ENCODE measurements at regions of chr2 and their contacts with region 1.

Region 1: DNA sequence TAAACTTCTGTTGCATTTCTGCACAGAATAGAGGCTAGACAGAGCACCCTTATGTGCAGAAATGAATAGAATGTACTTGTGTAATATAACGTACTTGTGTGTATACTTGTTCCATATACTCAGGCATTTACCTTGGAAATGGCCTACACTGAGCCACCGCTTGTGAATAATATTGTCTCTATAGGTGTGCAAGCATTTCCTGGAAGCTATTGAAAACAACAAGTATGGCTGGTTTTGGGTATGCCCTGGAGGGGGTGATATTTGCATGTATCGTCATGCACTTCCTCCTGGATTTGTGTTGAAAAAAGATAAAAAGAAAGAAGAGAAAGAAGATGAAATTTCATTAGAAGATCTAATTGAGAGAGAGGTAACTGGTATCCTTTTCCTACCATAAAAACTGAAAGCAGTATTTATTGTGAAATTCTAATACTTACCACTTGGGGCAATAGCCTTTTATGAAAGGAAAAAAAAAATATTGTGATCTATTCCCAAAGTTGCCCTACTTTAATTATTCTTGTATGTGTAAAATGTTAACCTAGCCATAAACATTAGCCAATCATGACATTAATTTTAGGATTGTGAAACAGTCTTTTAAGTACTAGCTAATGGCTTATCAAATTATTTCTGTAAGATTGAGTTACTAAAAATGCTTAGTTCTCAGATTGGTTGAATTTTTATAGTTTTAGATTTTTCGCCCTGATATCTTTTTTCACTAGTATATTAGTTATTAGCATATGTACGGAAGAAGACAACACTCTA is 18.0 kb downstream of the ZC3H15 start:
- DNase-seq: no peak
- H3K4me3 ChIP-seq: no peak overlapping the region
- H3K27ac ChIP-seq: no peak overlapping the region
- H3K4me1 ChIP-seq: no peaks in the 10 kb centered on the region
- H3K27me3 ChIP-seq: no peaks in the 10 kb centered on the region
- CTCF ChIP-seq: peak; percentile 25 to 61 (median 53)

Region 2: DNA sequence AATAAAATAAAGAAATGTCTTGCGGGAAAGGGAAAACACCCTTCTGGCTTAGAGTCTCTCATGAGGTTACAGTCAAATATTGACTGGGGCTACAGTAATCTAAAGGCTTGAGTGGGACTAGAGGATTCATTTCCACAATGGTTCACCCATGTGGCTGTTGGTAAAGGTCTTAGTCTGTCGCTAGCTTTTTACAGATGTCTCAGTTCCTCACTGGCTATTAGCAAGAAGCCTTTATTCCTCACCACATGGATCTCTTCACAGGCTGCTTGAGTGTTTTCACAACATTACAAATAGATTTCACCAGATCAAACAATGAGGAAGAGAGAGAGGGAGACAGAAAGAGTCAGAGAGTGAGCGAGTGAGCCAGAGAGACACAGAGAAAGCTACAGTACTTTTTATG is 26.2 kb before region 1 on chr2:
- intact Hi-C with region 1: no loop called
- DNase-seq: no peak
- H3K4me3 ChIP-seq: no peak overlapping the region
- H3K27ac ChIP-seq: no peak overlapping the region
- H3K4me1 ChIP-seq: no peaks in the 10 kb centered on the region
- H3K27me3 ChIP-seq: no peaks in the 10 kb centered on the region
- CTCF ChIP-seq: no peak

Region 3: DNA sequence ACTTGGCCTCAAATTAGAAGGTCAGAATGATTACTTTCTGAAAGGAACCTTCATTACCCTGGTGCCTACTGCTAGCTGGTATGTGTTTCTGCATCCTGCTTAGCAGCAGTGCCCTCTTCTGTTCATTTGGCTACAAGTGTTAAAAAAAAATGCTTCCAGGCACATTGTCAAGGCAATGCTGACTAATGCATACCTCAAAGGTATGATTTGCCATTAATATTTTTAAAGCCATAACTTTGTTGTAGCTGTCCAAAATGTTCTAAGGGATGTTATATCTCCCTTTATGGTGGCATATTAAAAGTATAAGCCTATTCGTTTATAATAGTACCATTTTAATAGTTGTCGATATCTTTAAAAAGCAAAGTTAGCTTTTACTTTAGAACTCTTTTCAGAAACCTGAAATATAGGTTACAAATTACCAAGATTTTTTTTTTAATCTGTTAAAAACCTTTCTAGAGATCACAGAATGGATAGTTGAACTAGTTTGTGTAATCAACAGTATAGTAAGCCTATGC is 137.8 kb after region 1 on chr2:
- intact Hi-C with region 1: loop called (anchors 1 kb)
- DNase-seq: no peak
- H3K4me3 ChIP-seq: no peak overlapping the region
- H3K27ac ChIP-seq: peak overlapping the region; percentile 8 to 24
- H3K4me1 ChIP-seq: no peaks in the 10 kb centered on the region
- H3K27me3 ChIP-seq: no peaks in the 10 kb centered on the region
- CTCF ChIP-seq: peak; percentile 63 to 81 (median 68)

Measured in ascending aorta (tissue), 2 donors.